BJ (cell line): ENCODE measurements at regions of chr12 and their contacts with region 1.

Region 1: GRCh38 chr12:77023501-77023900 is 41.9 kb downstream of the E2F7 start:
- DNase-seq: no peak
- H3K4me3 ChIP-seq: no peak overlapping the region
- H3K27me3 ChIP-seq: no peaks in the 10 kb centered on the region
- CTCF ChIP-seq: no peak

Region 2: GRCh38 chr12:76984566-76984965 is 38.9 kb before region 1 on chr12:
- CTCF ChIA-PET with region 1: no interaction called
- POLR2A ChIA-PET with region 1: no interaction called
- DNase-seq: no peak
- H3K4me3 ChIP-seq: no peak overlapping the region
- H3K27me3 ChIP-seq: no peaks in the 10 kb centered on the region
- CTCF ChIP-seq: no peak

Region 3: GRCh38 chr12:77010691-77011548 is 12.6 kb before region 1 on chr12:
- CTCF ChIA-PET with region 1: interaction called, 12 read pairs
- POLR2A ChIA-PET with region 1: no interaction called
- DNase-seq: peak; percentile 22
- H3K4me3 ChIP-seq: no peak overlapping the region
- H3K27me3 ChIP-seq: no peaks in the 10 kb centered on the region
- CTCF ChIP-seq: peak; percentile 98

Region 4: DNA sequence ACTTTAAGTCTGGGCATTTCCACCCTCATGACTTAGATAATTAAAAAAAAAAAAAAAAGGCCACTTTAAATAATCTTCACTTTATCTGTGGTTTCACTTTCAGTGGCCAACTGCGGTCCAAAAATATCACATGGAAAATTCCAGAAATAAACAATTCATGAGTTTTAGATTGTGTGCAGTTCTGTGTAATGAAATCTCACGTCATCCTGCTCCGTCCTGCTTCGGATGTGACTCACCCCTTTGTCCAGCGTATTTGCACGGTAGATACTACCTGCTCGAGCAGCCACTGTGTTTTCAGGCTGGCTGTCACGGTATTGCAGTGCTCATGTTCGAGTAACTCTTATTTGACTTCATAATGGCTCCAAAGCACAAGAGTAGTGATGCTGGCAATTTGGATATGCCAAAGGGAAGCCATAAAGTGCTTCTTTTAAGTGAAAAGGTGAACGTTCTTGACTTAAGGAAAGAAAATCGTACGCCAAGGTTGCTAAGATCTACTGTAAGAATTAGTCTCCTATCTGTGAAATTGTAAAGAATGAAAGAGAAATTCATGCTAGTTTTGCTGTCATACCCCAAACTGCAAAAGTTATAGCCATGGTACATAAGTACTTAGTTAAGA is 39.5 kb after region 1 on chr12:
- CTCF ChIA-PET with region 1: no interaction called
- POLR2A ChIA-PET with region 1: no interaction called
- DNase-seq: no peak
- H3K4me3 ChIP-seq: no peak overlapping the region
- H3K27me3 ChIP-seq: no peaks in the 10 kb centered on the region
- CTCF ChIP-seq: no peak